ENCODE measurements at regions of chr5 and their contacts with region 1.

Region 1: GRCh38 chr5:56481428-56482357 is 248.6 kb upstream of the ANKRD55 start:
- DNase-seq: peak; percentile 30
- H3K4me3 Mint-ChIP-seq: peak overlapping the region; percentile 77
- H3K27ac Mint-ChIP-seq: peak overlapping the region; percentile 84
- H3K4me1 Mint-ChIP-seq: peaks cover 50% of the 10 kb centered on the region
- H3K27me3 Mint-ChIP-seq: no peaks in the 10 kb centered on the region

Region 2: GRCh38 chr5:56270568-56271392 is 210.9 kb before region 1 on chr5:
- CTCF ChIA-PET with region 1: interaction called, 16 read pairs
- POLR2A ChIA-PET with region 1: interaction called, 4 read pairs
- DNase-seq: peak; percentile 82
- H3K4me3 Mint-ChIP-seq: no peak overlapping the region
- H3K27ac Mint-ChIP-seq: peak overlapping the region; percentile 0
- H3K4me1 Mint-ChIP-seq: peaks cover 17% of the 10 kb centered on the region
- H3K27me3 Mint-ChIP-seq: peaks cover 6% of the 10 kb centered on the region

Region 3: DNA sequence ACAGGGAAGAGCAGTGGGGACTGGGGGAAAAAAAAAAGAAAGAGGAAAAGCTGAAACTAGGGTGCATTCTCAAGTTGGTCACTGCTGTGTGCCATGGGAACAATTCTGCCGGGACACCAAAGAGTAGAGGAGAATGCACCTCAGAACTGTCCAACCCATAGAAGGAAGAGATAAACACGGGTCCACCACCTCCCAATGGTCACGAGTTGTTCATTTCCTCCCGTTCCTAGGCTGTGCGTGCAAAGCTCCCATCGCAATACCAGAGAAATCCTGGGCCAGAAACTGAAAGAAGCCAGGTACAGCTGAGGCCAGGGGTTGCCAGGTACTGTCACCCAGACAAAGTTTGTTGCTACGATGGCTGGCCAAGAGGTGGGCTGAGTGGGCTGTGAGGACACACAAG is 11.7 kb before region 1 on chr5:
- CTCF ChIA-PET with region 1: interaction called, 5 read pairs
- POLR2A ChIA-PET with region 1: interaction called, 12 read pairs
- DNase-seq: no peak
- H3K4me3 Mint-ChIP-seq: no peak overlapping the region
- H3K27ac Mint-ChIP-seq: no peak overlapping the region
- H3K4me1 Mint-ChIP-seq: no peaks in the 10 kb centered on the region
- H3K27me3 Mint-ChIP-seq: peaks cover 3% of the 10 kb centered on the region

Region 4: GRCh38 chr5:56503929-56504328 is 22.2 kb after region 1 on chr5:
- CTCF ChIA-PET with region 1: no interaction called
- POLR2A ChIA-PET with region 1: no interaction called
- DNase-seq: no peak
- H3K4me3 Mint-ChIP-seq: no peak overlapping the region
- H3K27ac Mint-ChIP-seq: no peak overlapping the region
- H3K4me1 Mint-ChIP-seq: peaks cover 11% of the 10 kb centered on the region
- H3K27me3 Mint-ChIP-seq: no peaks in the 10 kb centered on the region

Region 5: DNA sequence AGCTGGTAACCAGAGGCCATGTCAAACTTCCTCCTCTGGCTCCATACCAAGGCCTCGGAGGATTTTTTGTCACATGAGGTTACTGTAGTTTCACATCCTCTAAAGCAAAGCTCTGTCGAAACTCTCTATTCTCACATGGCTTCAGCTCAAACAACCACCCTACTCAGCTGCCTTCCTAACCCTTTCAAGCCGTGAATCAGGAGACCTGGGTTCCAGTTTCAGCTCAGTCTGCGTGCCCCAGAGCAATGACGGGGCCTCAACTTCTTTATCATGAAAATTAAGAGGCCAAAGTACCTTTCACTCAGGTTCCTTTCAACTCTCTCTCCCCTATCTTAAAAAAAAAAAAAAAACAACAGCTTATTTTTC is 188.4 kb after region 1 on chr5:
- CTCF ChIA-PET with region 1: no interaction called
- POLR2A ChIA-PET with region 1: interaction called, 13 read pairs
- DNase-seq: peak; percentile 68
- H3K4me3 Mint-ChIP-seq: no peak overlapping the region
- H3K27ac Mint-ChIP-seq: peak overlapping the region; percentile 87
- H3K4me1 Mint-ChIP-seq: peaks cover 52% of the 10 kb centered on the region
- H3K27me3 Mint-ChIP-seq: peaks cover 2% of the 10 kb centered on the region

Region 6: GRCh38 chr5:56814963-56815658 is 333.4 kb after region 1 on chr5 and contains the start of gene MAP3K1:
- CTCF ChIA-PET with region 1: no interaction called
- POLR2A ChIA-PET with region 1: interaction called, 24 read pairs
- DNase-seq: peak; percentile 83
- H3K4me3 Mint-ChIP-seq: peak within 1 kb of the TSS; percentile 96
- H3K27ac Mint-ChIP-seq: peak within 1 kb of the TSS; percentile 94
- H3K4me1 Mint-ChIP-seq: peaks cover 43% of the 10 kb centered on the region
- H3K27me3 Mint-ChIP-seq: peaks cover 3% of the 10 kb centered on the region
- total RNA-seq, gene MAP3K1: 47.5 to 49.5 TPM

Measured in activated CD4-positive, alpha-beta memory T cell treated with anti-CD3 and anti-CD28 coated beads, Interleukin-2, amount 10 ng/mL, durations not matched to agents 7 days and 5 days (primary cell).